B cell (primary cell): ENCODE measurements at regions of chr11 and their contacts with region 1.

Region 1: GRCh38 chr11:66112601-66113098 is 42.6 kb downstream of the PACS1 start:
- DNase-seq: peak; percentile 61
- ATAC-seq: peak; percentile 56
- H3K4me3 ChIP-seq: peak overlapping the region in 1 of 5 experiments; percentile 20
- H3K4me3 Mint-ChIP-seq: peak overlapping the region; percentile 83
- H3K27ac ChIP-seq: peak overlapping the region; percentile 59 to 70
- H3K27ac Mint-ChIP-seq: peak overlapping the region; percentile 93
- H3K4me1 ChIP-seq: peaks cover 94% of the 10 kb centered on the region in 2 donors
- H3K4me1 Mint-ChIP-seq: peaks cover 87% of the 10 kb centered on the region
- H3K27me3 ChIP-seq: no peaks in the 10 kb centered on the region
- H3K27me3 Mint-ChIP-seq: no peaks in the 10 kb centered on the region
- CTCF ChIP-seq: no peak

Region 2: DNA sequence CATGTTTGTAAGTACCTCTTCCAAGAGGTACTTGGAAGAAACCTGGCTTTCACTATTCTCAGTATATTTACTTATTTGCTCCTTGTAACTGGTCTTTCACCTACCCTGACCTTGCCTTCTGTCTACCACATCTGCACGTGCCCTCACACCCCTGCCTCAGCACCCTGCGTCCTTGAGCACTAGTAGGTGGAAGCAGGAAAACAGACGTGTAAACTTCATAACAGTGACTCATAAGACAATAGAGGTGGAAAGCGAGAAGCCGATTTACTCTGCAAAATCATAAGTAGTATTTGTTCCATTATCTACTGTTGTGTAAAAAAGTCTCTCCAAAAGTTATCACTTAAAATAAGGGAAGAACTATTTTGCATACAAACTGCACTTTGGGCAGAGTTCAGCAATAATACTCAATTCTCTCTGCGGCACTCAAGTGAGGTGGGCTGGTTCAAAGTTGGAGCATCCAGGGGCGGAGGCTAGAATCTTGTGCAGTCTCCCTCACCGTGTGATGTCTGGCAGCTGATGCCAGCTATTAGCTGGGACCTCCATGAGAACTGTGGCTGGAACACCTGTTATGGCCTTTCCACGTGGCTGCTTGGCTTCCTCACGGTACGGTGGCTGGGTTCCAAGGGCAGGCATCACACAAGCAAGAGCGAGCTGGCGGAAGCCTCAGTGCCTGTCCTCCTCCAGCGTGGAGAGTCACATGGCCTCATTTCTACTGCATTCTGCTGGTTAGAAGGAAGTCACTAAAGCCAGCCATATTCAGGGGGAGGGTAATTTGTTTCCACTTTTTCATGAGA is 12.2 kb before region 1 on chr11:
- CTCF ChIA-PET with region 1: interaction called, 6 read pairs
- POLR2A ChIA-PET with region 1: interaction called, 4 read pairs
- intact Hi-C with region 1: loop called (anchors 1 kb)
- DNase-seq: peak; percentile 77
- ATAC-seq: peak; percentile 90
- H3K4me3 ChIP-seq: peak overlapping the region in 4 of 5 experiments; percentile 30 to 55 (median 40)
- H3K4me3 Mint-ChIP-seq: peak overlapping the region; percentile 72
- H3K27ac ChIP-seq: peak overlapping the region; percentile 60 to 72
- H3K27ac Mint-ChIP-seq: peak overlapping the region; percentile 85
- H3K4me1 ChIP-seq: peaks cover 54 to 55% of the 10 kb centered on the region in 2 donors
- H3K4me1 Mint-ChIP-seq: peaks cover 65% of the 10 kb centered on the region
- H3K27me3 ChIP-seq: no peaks in the 10 kb centered on the region
- H3K27me3 Mint-ChIP-seq: no peaks in the 10 kb centered on the region
- CTCF ChIP-seq: no peak

Region 3: GRCh38 chr11:66126808-66127555 is 14.3 kb after region 1 on chr11:
- CTCF ChIA-PET with region 1: interaction called, 26 read pairs
- POLR2A ChIA-PET with region 1: interaction called, 9 read pairs
- intact Hi-C with region 1: loop called (anchors 1 kb)
- DNase-seq: peak; percentile 81
- ATAC-seq: peak; percentile 80
- H3K4me3 ChIP-seq: peak overlapping the region in 3 of 5 experiments; percentile 10 to 53 (median 27)
- H3K4me3 Mint-ChIP-seq: peak overlapping the region; percentile 90
- H3K27ac ChIP-seq: peak overlapping the region; percentile 76 to 87
- H3K27ac Mint-ChIP-seq: peak overlapping the region; percentile 98
- H3K4me1 ChIP-seq: peaks cover 57 to 73% of the 10 kb centered on the region in 2 donors
- H3K4me1 Mint-ChIP-seq: peaks cover 81% of the 10 kb centered on the region
- H3K27me3 ChIP-seq: no peaks in the 10 kb centered on the region
- H3K27me3 Mint-ChIP-seq: no peaks in the 10 kb centered on the region
- CTCF ChIP-seq: no peak

Region 4: GRCh38 chr11:66136752-66137123 is 24.1 kb after region 1 on chr11:
- CTCF ChIA-PET with region 1: interaction called, 18 read pairs
- POLR2A ChIA-PET with region 1: interaction called, 3 read pairs
- intact Hi-C with region 1: no loop called
- DNase-seq: no peak
- ATAC-seq: no peak
- H3K4me3 ChIP-seq: no peak overlapping the region
- H3K4me3 Mint-ChIP-seq: no peak overlapping the region
- H3K27ac ChIP-seq: peak overlapping the region in 1 of 2 donors; percentile 57
- H3K27ac Mint-ChIP-seq: peak overlapping the region; percentile 65
- H3K4me1 ChIP-seq: peaks cover 44 to 50% of the 10 kb centered on the region in 2 donors
- H3K4me1 Mint-ChIP-seq: peaks cover 75% of the 10 kb centered on the region
- H3K27me3 ChIP-seq: no peaks in the 10 kb centered on the region
- H3K27me3 Mint-ChIP-seq: no peaks in the 10 kb centered on the region
- CTCF ChIP-seq: no peak

Region 5: GRCh38 chr11:66268283-66268951 is 155.8 kb after region 1 on chr11 and contains the start of gene RAB1B:
- CTCF ChIA-PET with region 1: no interaction called
- POLR2A ChIA-PET with region 1: no interaction called
- intact Hi-C with region 1: no loop called
- DNase-seq: peak; percentile 100
- ATAC-seq: peak; percentile 77
- H3K4me3 ChIP-seq: peak within 1 kb of the TSS; percentile 83 to 100 (median 98)
- H3K4me3 Mint-ChIP-seq: peak within 1 kb of the TSS; percentile 95
- H3K27ac ChIP-seq: peak within 1 kb of the TSS; percentile 81 to 97
- H3K27ac Mint-ChIP-seq: peak within 1 kb of the TSS; percentile 96
- H3K4me1 ChIP-seq: peaks cover 14 to 27% of the 10 kb centered on the region in 2 donors
- H3K4me1 Mint-ChIP-seq: peaks cover 29% of the 10 kb centered on the region
- H3K27me3 ChIP-seq: no peaks in the 10 kb centered on the region
- H3K27me3 Mint-ChIP-seq: no peaks in the 10 kb centered on the region
- CTCF ChIP-seq: no peak
- total RNA-seq, gene RAB1B: 76.0 and 77.8 TPM in 2 replicates